Gastrocnemius medialis (tissue), 4 donors: ENCODE measurements at regions of chr20 and their contacts with region 1.

Region 1: GRCh38 chr20:1375515-1375914 is 17.3 kb downstream of the FKBP1A start:
- DNase-seq: peak in 1 of 2 donors; percentile 56
- ATAC-seq: peak; percentile 53 to 93
- H3K4me3 ChIP-seq: no peak overlapping the region
- H3K27ac ChIP-seq: peak overlapping the region; percentile 36 to 63 (median 62)
- H3K4me1 ChIP-seq: peaks cover 62 to 71% of the 10 kb centered on the region in 2 donors
- H3K27me3 ChIP-seq: no peaks in the 10 kb centered on the region
- CTCF ChIP-seq: no peak
- POLR2A ChIP-seq: no peak

Region 2: DNA sequence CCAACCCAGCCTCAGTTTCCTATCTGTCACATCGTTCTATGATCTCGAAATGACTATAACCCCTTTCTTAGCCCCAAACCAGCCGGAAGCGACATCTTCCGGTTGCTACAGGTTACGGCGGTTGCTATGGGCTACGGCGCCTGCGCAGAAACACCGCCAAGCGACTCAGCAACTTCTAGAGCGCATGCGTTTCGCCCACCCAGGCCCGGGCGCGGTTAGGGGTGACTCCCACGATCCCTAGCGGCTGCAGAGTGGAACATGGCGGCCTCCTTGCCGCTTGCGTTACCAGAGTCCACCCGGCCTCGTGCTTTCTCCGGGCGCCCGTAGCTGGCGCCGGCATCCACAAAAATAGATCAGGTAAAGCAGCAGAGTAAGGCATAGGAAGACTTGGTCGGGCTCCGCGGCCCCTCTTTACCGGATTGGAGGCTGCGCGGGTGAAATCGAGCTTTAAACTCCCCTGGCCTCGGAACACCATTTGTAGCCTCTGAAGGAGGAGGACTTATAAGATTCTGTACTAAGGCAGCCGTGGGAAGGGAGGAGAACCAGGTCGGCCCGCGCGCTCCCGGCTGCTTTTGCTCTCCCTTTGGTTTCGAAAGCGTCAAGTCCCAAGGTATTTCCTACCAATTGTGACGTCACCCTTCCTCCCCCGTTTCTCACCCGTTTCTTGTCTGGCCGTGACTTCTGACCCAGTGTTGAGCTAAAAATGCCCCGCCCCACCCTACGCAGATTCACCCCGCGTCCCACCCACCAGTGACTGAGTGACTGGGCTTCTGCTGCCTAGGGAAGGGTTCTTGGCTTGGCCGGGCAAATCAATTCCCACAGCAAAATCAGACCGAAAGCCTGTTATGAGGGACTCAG is 50.1 kb before region 1 on chr20:
- in situ Hi-C with region 1: loop called in 1 of 4 experiments (anchors 10 kb)
- intact Hi-C with region 1: loop called (anchors 2 kb)
- DNase-seq: peak; percentile 96 to 97
- ATAC-seq: peak; percentile 79
- H3K4me3 ChIP-seq: peak overlapping the region; percentile 63 to 94 (median 81)
- H3K27ac ChIP-seq: peak overlapping the region; percentile 93 to 99 (median 97)
- H3K4me1 ChIP-seq: peaks cover 53 to 69% of the 10 kb centered on the region in 2 donors
- H3K27me3 ChIP-seq: no peaks in the 10 kb centered on the region
- CTCF ChIP-seq: peak in 3 of 5 experiments; percentile 21 to 45 (median 44)
- POLR2A ChIP-seq: peak; percentile 92 to 94